IMR-90 (cell line): ENCODE measurements at regions of chr4 and their contacts with region 1.

Region 1: DNA sequence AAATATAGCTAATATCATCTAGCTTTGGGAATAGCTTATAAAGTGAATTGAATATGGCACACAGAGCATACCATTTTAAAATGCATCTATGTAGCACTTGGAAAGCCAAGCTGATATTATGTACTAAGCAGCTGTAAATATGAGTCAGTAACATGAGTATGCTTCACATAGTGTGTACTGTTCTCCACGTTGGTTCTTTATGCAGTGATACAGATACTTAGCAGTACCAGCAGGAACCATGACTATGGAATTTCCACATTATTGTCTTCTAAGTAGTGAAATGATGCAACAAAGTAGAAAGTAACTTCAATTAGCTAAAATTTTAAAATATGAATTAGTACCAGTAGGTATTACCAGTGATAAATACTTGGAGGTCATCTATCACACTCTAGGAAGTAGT is 320.1 kb downstream of the BMPR1B start:
- DNase-seq: peak; percentile 38
- ATAC-seq: no peak
- H3K4me3 ChIP-seq: no peak overlapping the region
- H3K27ac ChIP-seq: no peak overlapping the region
- H3K4me1 ChIP-seq: no peaks in the 10 kb centered on the region
- H3K27me3 ChIP-seq: no peaks in the 10 kb centered on the region
- CTCF ChIP-seq: no peak
- POLR2A ChIP-seq: no peak
- RAD21 ChIP-seq: no peak

Region 2: DNA sequence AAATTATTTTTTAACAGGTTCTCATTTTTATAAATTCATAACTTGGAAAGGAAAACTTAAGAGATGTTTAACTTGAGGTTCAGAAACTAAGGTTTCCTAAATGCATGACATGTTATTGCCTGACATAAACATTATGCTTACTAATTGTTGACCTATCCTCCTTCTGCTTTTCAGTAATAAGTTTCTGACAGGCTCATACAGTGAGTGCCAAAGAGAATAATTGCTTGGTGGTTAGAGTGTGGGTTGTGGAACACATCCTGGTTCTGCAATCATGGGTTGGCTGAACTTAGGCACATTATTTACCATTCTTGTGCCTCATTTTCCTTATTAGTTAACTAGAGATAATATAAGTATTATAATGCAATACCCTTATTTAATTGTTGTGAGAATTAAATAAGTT is 263.6 kb before region 1 on chr4:
- CTCF ChIA-PET with region 1: no interaction called
- POLR2A ChIA-PET with region 1: no interaction called
- dilution Hi-C with region 1: no loop called
- in situ Hi-C with region 1: no loop called
- intact Hi-C with region 1: loop called (anchors 10 kb)
- DNase-seq: peak; percentile 13
- ATAC-seq: peak; percentile 46
- H3K4me3 ChIP-seq: no peak overlapping the region
- H3K27ac ChIP-seq: no peak overlapping the region
- H3K4me1 ChIP-seq: no peaks in the 10 kb centered on the region
- H3K27me3 ChIP-seq: peaks cover 2% of the 10 kb centered on the region; the same call in 1 of the 2 replicates
- CTCF ChIP-seq: no peak
- POLR2A ChIP-seq: no peak
- RAD21 ChIP-seq: no peak

Region 3: DNA sequence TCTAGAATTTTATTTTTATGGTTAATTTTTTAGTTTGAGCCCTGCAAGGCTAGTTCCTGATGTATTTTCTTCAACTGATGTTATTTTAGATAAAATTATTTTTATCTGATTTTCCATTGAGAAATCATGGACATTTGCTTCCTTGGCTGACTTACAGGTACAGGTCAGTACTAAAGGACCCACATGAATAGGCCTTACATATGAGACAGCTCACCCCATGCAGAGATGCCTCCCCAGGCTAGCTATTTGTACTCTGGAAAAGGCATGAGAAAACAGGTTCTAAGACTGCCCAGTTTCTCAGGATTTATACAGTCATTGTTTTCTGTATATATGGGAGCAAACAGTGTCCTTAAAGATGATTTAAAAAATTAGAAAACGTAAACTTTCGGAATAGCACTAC is 64.6 kb before region 1 on chr4:
- CTCF ChIA-PET with region 1: no interaction called
- POLR2A ChIA-PET with region 1: no interaction called
- dilution Hi-C with region 1: no loop called
- in situ Hi-C with region 1: no loop called
- intact Hi-C with region 1: loop called (anchors 5 kb)
- DNase-seq: no peak
- ATAC-seq: no peak
- H3K4me3 ChIP-seq: no peak overlapping the region
- H3K27ac ChIP-seq: no peak overlapping the region
- H3K4me1 ChIP-seq: no peaks in the 10 kb centered on the region
- H3K27me3 ChIP-seq: peaks cover 2% of the 10 kb centered on the region; the same call in 1 of the 2 replicates
- CTCF ChIP-seq: no peak
- POLR2A ChIP-seq: no peak
- RAD21 ChIP-seq: no peak

Region 4: GRCh38 chr4:95038791-95039190 is 39.1 kb before region 1 on chr4:
- CTCF ChIA-PET with region 1: no interaction called
- POLR2A ChIA-PET with region 1: no interaction called
- dilution Hi-C with region 1: no loop called
- in situ Hi-C with region 1: no loop called
- intact Hi-C with region 1: no loop called
- DNase-seq: no peak
- ATAC-seq: no peak
- H3K4me3 ChIP-seq: no peak overlapping the region
- H3K27ac ChIP-seq: no peak overlapping the region
- H3K4me1 ChIP-seq: no peaks in the 10 kb centered on the region
- H3K27me3 ChIP-seq: no peaks in the 10 kb centered on the region
- CTCF ChIP-seq: no peak
- POLR2A ChIP-seq: no peak
- RAD21 ChIP-seq: no peak